ENCODE measurements at regions of chr10 and their contacts with region 1.

Region 1: GRCh38 chr10:34528320-34528719 is 286.8 kb downstream of the PARD3 start:
- DNase-seq: no peak

Region 2: GRCh38 chr10:34397324-34397723 is 131.0 kb before region 1 on chr10:
- intact Hi-C with region 1: no loop called
- DNase-seq: no peak

Region 3: GRCh38 chr10:34628174-34628796 is 100.0 kb after region 1 on chr10:
- intact Hi-C with region 1: loop called (anchors 5 kb)
- DNase-seq: peak; percentile 86

Measured in cardiac septum (tissue), 1 donor.